AG04449 (cell line): ENCODE measurements at regions of chr17 and their contacts with region 1.

Region 1: GRCh38 chr17:73371285-73371684 is 59.5 kb upstream of the CDC42EP4 start:
- DNase-seq: peak; percentile 78
- H3K4me3 ChIP-seq: no peak overlapping the region
- CTCF ChIP-seq: no peak

Region 2: GRCh38 chr17:73231841-73232586 is 139.3 kb before region 1 on chr17:
- CTCF ChIA-PET with region 1: interaction called, 24 read pairs
- POLR2A ChIA-PET with region 1: interaction called, 3 read pairs
- DNase-seq: peak; percentile 51
- H3K4me3 ChIP-seq: peak overlapping the region; percentile 93
- CTCF ChIP-seq: no peak

Region 3: DNA sequence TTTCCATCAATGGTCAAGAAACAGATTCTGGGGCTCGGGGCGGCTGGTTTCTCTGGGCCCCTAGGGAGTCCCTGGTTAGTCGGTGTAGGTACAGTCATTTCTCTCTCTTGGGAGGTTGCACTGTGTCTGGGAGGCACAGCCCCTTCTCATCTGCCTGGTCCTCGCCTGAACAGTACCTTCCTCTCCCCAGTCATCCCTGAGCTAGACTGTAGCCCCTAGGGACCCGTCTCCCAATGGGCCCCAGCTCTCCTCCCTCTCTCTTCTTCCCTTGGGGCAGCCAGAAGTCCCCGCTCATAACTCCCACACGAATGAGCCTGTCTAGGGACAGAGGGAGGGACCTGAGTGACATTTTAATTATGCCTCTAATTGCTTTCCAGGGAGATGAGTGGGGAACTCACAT is 89.4 kb before region 1 on chr17:
- CTCF ChIA-PET with region 1: interaction called, 14 read pairs
- POLR2A ChIA-PET with region 1: no interaction called
- DNase-seq: no peak
- H3K4me3 ChIP-seq: no peak overlapping the region
- CTCF ChIP-seq: no peak

Region 4: DNA sequence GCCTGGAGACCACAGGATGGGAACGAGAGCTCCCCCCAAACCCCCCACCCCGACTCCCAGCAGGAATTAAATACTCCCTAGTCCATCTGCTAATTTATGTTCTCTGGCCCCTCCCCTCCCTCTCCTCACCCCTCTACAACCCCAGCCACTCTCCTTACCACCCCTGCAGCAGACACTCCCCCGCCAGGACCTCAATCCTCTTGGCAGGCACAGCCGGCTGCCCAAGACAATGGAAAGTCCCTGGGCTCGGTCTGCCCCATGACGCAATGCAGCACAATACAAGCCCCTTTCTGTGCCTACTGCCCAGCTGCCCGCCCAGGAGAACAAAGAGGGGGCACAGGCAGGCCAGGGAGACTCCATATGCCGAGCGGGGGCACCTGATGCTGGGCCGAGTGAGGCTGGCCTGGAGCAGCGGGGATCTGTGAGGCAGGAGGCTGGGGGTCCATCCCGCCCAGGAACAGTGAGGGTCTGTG is 29.2 kb before region 1 on chr17:
- CTCF ChIA-PET with region 1: interaction called, 13 read pairs
- POLR2A ChIA-PET with region 1: no interaction called
- DNase-seq: peak; percentile 58
- H3K4me3 ChIP-seq: no peak overlapping the region
- CTCF ChIP-seq: no peak

Region 5: GRCh38 chr17:73387746-73388577 is 16.7 kb after region 1 on chr17:
- CTCF ChIA-PET with region 1: interaction called, 12 read pairs
- POLR2A ChIA-PET with region 1: no interaction called
- DNase-seq: no peak
- H3K4me3 ChIP-seq: no peak overlapping the region
- CTCF ChIP-seq: no peak

Region 6: GRCh38 chr17:73731733-73732132 is 360.4 kb after region 1 on chr17:
- CTCF ChIA-PET with region 1: no interaction called
- POLR2A ChIA-PET with region 1: no interaction called
- DNase-seq: no peak
- H3K4me3 ChIP-seq: no peak overlapping the region
- CTCF ChIP-seq: no peak